ENCODE measurements at regions of chr12 and their contacts with region 1.

Region 1: DNA sequence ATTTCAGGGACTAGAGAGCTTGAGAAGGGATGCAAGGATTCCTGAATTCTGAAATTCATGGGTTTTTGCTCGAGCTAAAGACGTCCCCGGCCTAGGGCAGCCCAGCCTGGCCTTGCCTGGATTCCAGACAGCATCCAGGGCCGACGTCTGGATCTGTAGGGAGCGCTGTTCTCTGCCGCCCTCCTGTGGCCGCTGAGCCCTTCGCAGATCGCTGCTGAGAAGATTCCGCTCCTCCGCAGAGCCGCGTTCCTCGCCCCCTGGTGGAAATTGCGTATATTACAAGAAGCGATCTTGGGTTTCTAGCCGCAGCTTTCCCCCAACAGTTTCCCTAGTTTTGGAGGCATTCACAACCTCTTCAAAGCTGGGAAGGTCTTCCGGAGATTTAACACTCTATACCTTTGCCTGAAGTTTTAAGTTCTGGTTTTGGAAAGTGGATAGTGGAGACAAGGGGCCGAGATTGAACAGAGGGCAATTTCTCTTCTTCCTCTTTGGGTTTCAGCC is 5.1 kb downstream of the CISTR start:
- DNase-seq: peak; percentile 74 to 93 (median 88)
- ATAC-seq: peak; percentile 85
- H3K4me3 ChIP-seq: no peak overlapping the region
- H3K4me3 Mint-ChIP-seq: peak overlapping the region; percentile 40
- H3K27ac ChIP-seq: no peak overlapping the region
- H3K27ac Mint-ChIP-seq: no peak overlapping the region
- H3K4me1 ChIP-seq: peaks cover 25% of the 10 kb centered on the region
- H3K4me1 Mint-ChIP-seq: peaks cover 17% of the 10 kb centered on the region
- H3K27me3 ChIP-seq: peaks cover 20 to 24% of the 10 kb centered on the region in 2 experiments
- H3K27me3 Mint-ChIP-seq: peaks cover 44% of the 10 kb centered on the region
- CTCF ChIP-seq: peak; percentile 100

Region 2: GRCh38 chr12:53675651-53676453 is 70.8 kb before region 1 on chr12 and contains the start of gene ATP5MC2:
- CTCF ChIA-PET with region 1: interaction called, 61 read pairs
- POLR2A ChIA-PET with region 1: interaction called, 3 read pairs
- intact Hi-C with region 1: loop called in 1 of 2 experiments (anchors 1 kb)
- DNase-seq: peak; percentile 96 to 99 (median 97)
- ATAC-seq: peak; percentile 90
- H3K4me3 ChIP-seq: peak within 1 kb of the TSS; percentile 67 to 92
- H3K4me3 Mint-ChIP-seq: peak within 1 kb of the TSS; percentile 92
- H3K27ac ChIP-seq: peak within 1 kb of the TSS; percentile 60 to 84
- H3K27ac Mint-ChIP-seq: peak within 1 kb of the TSS; percentile 95
- H3K4me1 ChIP-seq: peaks cover 14% of the 10 kb centered on the region
- H3K4me1 Mint-ChIP-seq: peaks cover 36% of the 10 kb centered on the region
- H3K27me3 ChIP-seq: peaks cover 0 to 16% of the 10 kb centered on the region in 2 experiments
- H3K27me3 Mint-ChIP-seq: peaks cover 16% of the 10 kb centered on the region
- CTCF ChIP-seq: peak; percentile 99
- total RNA-seq, gene ATP5MC2: 220 to 229 TPM

Region 3: DNA sequence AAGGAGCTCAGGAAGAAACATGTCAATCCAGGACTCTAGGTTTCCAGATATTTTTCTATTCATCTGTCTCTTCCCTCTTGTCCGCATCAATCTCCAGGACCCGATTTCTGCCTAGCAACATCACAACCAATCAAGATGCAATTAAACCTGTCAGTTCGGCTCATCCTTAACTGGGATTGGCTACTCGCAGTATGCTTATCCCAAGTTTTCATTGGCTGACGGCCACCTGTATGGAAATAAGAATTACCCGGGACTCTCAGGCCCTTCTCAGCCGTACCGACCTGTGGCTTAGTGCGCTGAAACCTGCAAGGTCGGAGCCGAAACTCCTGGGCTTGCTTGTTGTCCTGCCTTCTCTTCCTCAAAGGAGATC is 50.4 kb before region 1 on chr12:
- CTCF ChIA-PET with region 1: interaction called, 288 read pairs
- POLR2A ChIA-PET with region 1: interaction called, 6 read pairs
- intact Hi-C with region 1: loop called (anchors 1 kb)
- DNase-seq: peak in 1 of 9 experiments; percentile 41
- ATAC-seq: no peak
- H3K4me3 ChIP-seq: no peak overlapping the region
- H3K4me3 Mint-ChIP-seq: peak overlapping the region; percentile 38
- H3K27ac ChIP-seq: no peak overlapping the region
- H3K27ac Mint-ChIP-seq: no peak overlapping the region
- H3K4me1 ChIP-seq: peaks cover 22% of the 10 kb centered on the region
- H3K4me1 Mint-ChIP-seq: peaks cover 28% of the 10 kb centered on the region
- H3K27me3 ChIP-seq: peaks cover 29 to 35% of the 10 kb centered on the region in 2 experiments
- H3K27me3 Mint-ChIP-seq: peaks cover 78% of the 10 kb centered on the region
- CTCF ChIP-seq: no peak

Region 4: DNA sequence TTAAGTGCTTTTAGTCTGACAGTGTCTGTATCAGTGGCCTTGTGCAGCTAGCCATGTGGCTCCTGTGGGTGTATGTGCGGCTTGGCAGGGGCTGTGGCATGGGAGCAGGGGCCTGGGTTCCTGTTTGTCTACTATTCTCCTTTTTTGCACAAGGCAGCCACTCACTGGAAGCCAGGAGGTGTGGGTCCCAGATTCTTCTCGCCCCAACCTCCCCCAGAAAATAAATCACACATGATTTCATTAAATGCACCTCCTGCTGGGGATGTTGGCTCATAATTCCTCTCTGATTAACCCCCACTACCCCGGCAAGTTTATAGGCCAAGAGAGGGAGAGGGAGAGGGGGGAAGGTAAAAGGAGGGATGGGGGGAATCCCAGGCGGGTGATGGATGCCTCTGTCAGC is 37.0 kb before region 1 on chr12:
- CTCF ChIA-PET with region 1: interaction called, 236 read pairs
- POLR2A ChIA-PET with region 1: interaction called, 3 read pairs
- intact Hi-C with region 1: no loop called
- DNase-seq: no peak
- ATAC-seq: no peak
- H3K4me3 ChIP-seq: no peak overlapping the region
- H3K4me3 Mint-ChIP-seq: no peak overlapping the region
- H3K27ac ChIP-seq: no peak overlapping the region
- H3K27ac Mint-ChIP-seq: no peak overlapping the region
- H3K4me1 ChIP-seq: no peaks in the 10 kb centered on the region
- H3K4me1 Mint-ChIP-seq: no peaks in the 10 kb centered on the region
- H3K27me3 ChIP-seq: peaks cover 0 to 4% of the 10 kb centered on the region in 2 experiments
- H3K27me3 Mint-ChIP-seq: peaks cover 15% of the 10 kb centered on the region
- CTCF ChIP-seq: no peak

Region 5: GRCh38 chr12:53727310-53728041 is 19.2 kb before region 1 on chr12 and contains the start of gene CALCOCO1:
- CTCF ChIA-PET with region 1: interaction called, 265 read pairs
- POLR2A ChIA-PET with region 1: interaction called, 14 read pairs
- intact Hi-C with region 1: loop called (anchors 1 to 2 kb)
- DNase-seq: peak; percentile 95 to 99 (median 97)
- ATAC-seq: peak; percentile 98
- H3K4me3 ChIP-seq: peak within 1 kb of the TSS; percentile 67 to 76
- H3K4me3 Mint-ChIP-seq: peak within 1 kb of the TSS; percentile 95
- H3K27ac ChIP-seq: peak within 1 kb of the TSS; percentile 65 to 72
- H3K27ac Mint-ChIP-seq: peak within 1 kb of the TSS; percentile 92
- H3K4me1 ChIP-seq: peaks cover 18% of the 10 kb centered on the region
- H3K4me1 Mint-ChIP-seq: peaks cover 30% of the 10 kb centered on the region
- H3K27me3 ChIP-seq: no peaks in the 10 kb centered on the region
- H3K27me3 Mint-ChIP-seq: no peaks in the 10 kb centered on the region
- CTCF ChIP-seq: no peak
- total RNA-seq, gene CALCOCO1: 49.2 to 49.5 TPM

Region 6: DNA sequence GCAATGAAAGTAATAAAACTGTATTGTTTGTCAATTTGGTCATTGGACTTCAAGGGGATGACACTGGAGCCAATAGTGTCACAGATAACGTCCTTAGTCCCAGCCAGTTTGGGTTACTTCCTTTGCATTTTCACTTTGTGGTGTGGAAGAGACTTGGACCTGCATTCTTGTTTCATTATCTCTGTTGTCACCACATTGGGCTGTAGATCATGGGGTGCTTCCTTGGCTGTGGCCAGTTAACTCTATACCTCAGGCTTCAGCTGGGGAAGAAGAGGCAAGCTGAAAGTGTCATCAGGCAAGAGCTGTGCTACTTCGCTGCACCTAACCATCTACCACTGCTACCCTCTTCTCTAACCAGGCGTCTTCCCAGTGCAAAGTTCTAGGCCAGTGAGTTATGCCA is 20.2 kb after region 1 on chr12:
- CTCF ChIA-PET with region 1: interaction called, 17 read pairs
- POLR2A ChIA-PET with region 1: no interaction called
- intact Hi-C with region 1: no loop called
- DNase-seq: no peak
- ATAC-seq: no peak
- H3K4me3 ChIP-seq: no peak overlapping the region
- H3K4me3 Mint-ChIP-seq: no peak overlapping the region
- H3K27ac ChIP-seq: no peak overlapping the region
- H3K27ac Mint-ChIP-seq: no peak overlapping the region
- H3K4me1 ChIP-seq: no peaks in the 10 kb centered on the region
- H3K4me1 Mint-ChIP-seq: no peaks in the 10 kb centered on the region
- H3K27me3 ChIP-seq: peaks cover 3 to 6% of the 10 kb centered on the region in 2 experiments
- H3K27me3 Mint-ChIP-seq: peaks cover 58% of the 10 kb centered on the region
- CTCF ChIP-seq: no peak

Measured in CD8-positive, alpha-beta T cell (primary cell).